MCF 10A (cell line): ENCODE measurements at regions of chr7 and their contacts with region 1.

Region 1: GRCh38 chr7:124856299-124856888 is 73.2 kb downstream of the POT1 start:
- DNase-seq: peak; percentile 52
- H3K4me3 Mint-ChIP-seq: no peak overlapping the region
- H3K27ac Mint-ChIP-seq: no peak overlapping the region
- H3K4me1 Mint-ChIP-seq: peaks cover 6% of the 10 kb centered on the region
- H3K27me3 Mint-ChIP-seq: no peaks in the 10 kb centered on the region
- CTCF ChIP-seq: peak; percentile 47

Region 2: DNA sequence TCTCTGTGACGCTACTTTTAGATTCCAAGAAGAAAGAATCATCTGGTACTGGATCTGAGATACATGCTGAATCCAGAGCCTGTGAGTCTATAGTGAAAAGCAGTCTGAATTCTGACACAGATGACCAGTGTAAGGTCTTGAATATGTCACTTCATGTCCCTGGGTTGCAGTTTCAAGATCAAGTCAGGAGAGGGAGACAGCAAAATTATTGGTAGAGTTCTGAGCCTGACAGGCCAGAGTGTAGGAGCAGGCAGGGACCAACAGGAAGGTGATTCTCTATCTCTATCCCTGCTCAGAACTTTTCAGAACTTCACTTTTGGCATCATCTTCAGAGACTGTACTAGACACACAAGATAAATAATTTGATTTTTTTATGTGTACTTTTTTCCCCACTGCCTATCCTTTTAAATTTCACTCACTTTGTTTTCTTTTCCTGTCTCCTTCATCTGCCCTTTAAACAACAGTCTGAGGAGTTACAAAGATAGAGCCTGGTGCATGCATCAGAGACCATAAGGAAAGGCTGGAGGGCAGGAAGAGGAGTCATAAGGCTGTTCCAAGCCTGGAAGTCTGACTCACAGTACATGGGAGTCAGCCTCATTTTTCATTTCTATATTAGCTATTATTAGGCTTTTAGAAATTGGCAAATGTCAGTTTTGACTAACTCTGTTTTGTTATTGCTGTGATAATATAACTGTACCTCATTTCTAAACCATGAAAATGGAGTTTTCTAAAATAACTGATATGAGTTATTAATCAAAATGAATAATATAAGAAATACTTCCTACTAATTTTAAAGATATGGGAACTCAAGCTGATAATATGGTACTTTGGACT is 703.3 kb before region 1 on chr7:
- CTCF ChIA-PET with region 1: interaction called, 11 read pairs
- POLR2A ChIA-PET with region 1: no interaction called
- intact Hi-C with region 1: loop called (anchors 1 kb)
- DNase-seq: peak; percentile 62
- H3K4me3 Mint-ChIP-seq: no peak overlapping the region
- H3K27ac Mint-ChIP-seq: peak overlapping the region; percentile 75
- H3K4me1 Mint-ChIP-seq: peaks cover 9% of the 10 kb centered on the region
- H3K27me3 Mint-ChIP-seq: no peaks in the 10 kb centered on the region
- CTCF ChIP-seq: peak; percentile 29

Region 3: DNA sequence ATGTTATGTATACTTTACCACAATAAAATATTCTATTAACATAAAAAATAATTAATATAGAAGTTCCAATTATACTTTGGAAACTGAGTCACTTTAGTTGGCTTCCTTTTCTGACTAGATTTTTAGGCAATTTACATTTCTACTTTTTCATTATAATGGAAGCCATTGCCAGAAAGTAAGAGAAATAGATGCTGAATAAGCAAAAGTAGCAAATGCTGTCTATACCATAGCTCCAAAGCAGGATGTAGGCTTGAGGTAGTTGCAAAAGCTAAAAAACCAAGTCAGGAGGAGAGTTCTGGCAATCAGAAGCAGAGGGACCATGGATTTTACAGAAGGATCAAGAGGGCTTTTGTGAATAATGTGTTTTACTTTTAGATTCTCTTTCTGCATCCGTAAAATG is 561.1 kb before region 1 on chr7:
- CTCF ChIA-PET with region 1: no interaction called
- POLR2A ChIA-PET with region 1: no interaction called
- intact Hi-C with region 1: no loop called
- DNase-seq: no peak
- H3K4me3 Mint-ChIP-seq: no peak overlapping the region
- H3K27ac Mint-ChIP-seq: no peak overlapping the region
- H3K4me1 Mint-ChIP-seq: no peaks in the 10 kb centered on the region
- H3K27me3 Mint-ChIP-seq: no peaks in the 10 kb centered on the region
- CTCF ChIP-seq: no peak

Region 4: DNA sequence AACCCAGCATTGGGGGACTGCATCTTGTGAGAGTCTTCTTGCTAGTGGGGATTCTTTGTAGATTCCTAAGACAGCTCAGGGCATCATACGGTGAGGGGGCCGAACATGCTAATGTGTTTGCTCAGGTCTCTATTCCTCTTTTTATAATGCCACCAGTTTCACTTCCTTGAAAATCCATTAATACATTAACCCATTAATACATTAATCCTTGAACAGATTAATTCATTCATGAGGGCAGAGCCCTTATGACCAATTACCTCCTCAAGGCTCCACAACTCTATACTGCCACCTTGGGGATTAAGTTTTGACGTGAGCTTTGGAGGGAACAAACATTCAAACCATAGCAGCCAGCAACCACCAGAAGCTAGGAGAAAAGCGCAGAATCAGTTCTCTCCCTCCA is 140.4 kb after region 1 on chr7:
- CTCF ChIA-PET with region 1: interaction called, 5 read pairs
- POLR2A ChIA-PET with region 1: no interaction called
- intact Hi-C with region 1: loop called (anchors 2 kb)
- DNase-seq: peak; percentile 54
- H3K4me3 Mint-ChIP-seq: no peak overlapping the region
- H3K27ac Mint-ChIP-seq: no peak overlapping the region
- H3K4me1 Mint-ChIP-seq: peaks cover 5% of the 10 kb centered on the region
- H3K27me3 Mint-ChIP-seq: no peaks in the 10 kb centered on the region
- CTCF ChIP-seq: no peak